ENCODE measurements at regions of chr7 and their contacts with region 1.

Region 1: DNA sequence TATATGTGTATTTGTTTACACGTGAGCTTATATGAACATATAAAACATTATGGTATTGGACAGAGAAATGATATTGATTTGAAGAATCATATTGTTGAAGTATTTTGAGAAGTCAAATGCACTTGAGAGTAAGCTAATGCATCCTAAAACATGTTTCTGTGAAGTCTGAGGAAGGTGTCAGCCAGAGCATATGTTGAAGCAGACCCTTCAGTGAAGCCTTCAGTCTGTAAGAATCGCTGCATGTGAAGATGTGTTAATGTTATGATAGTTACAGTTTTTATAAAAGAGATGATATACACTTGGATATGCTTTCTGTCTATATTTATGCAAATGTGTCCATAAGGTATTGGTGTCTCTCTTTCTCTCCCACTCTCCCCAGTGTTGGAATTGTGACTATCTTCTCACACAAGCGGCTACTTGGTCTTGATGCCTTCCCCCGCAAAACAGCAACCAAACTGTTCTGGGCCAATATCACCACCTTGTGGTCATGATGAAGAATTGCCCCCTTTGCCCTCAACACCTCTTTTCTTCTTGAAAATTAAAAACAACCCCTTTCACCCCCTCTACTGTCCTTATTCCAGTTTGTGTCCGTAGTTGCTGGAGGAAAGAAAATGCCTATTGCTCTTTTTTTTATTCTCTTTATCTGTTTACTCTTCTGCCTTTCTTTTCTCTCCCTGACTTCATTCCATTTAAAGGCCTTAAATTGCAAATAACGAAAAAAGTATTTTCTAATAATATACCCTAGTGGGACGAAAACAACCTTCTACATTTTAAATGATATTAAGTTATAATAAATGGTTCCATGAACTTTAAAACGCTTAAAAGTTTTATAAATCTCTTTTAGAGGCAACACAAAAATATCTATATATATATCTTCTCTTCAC is 64.9 kb downstream of the IKZF1 start:
- DNase-seq: peak; percentile 41
- CTCF ChIP-seq: peak; percentile 64

Region 2: GRCh38 chr7:50147951-50148808 is 221.2 kb before region 1 on chr7:
- CTCF ChIA-PET with region 1: interaction called, 10 read pairs
- POLR2A ChIA-PET with region 1: no interaction called
- DNase-seq: peak; percentile 43
- CTCF ChIP-seq: no peak

Region 3: DNA sequence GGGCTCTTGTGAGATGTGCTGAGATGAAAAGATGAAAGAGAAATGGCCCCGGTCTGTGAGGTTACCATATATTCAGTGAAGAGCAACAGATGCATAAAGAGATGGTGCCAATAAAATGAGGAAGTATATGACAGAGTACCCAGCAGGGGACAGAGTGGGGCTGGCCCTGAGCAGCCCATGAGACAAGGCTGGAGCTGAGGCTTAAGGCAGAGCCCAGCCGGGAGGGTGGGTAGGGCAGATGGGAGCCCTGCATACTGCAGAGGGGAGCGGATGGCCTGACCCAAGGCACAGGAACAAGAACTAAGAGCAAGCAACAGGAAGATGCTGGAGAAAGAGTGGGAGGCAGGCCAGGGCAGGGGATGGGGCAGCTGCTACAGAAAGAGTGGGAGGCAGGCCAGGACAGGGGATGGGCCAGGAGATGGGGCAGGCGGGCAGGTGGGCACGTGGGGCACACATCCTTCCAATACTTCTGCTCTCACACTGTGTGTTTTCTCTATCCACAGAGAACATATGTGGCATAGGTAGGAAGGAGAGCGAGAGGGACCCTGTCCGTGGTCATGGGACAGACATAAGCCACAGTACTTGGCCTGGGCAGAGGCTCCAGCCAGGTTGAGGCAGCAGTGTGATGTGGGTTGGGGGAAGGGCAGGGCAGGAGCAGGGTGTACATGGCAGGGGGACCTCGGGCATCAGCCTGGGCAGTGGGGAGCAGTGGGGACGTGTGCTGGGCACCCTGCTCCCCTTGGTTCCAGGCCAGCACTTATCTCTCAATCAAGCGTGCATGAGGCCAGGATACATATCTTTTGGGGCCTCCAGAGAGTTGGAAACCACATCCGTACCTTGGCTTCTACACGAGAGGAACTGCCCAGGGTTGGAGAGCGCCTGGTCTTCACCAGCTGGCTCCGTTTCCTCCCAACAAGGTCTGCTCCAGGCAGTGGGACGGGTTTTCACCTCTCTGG is 156.4 kb before region 1 on chr7:
- CTCF ChIA-PET with region 1: interaction called, 136 read pairs
- POLR2A ChIA-PET with region 1: no interaction called
- DNase-seq: no peak
- CTCF ChIP-seq: peak; percentile 32

Region 4: DNA sequence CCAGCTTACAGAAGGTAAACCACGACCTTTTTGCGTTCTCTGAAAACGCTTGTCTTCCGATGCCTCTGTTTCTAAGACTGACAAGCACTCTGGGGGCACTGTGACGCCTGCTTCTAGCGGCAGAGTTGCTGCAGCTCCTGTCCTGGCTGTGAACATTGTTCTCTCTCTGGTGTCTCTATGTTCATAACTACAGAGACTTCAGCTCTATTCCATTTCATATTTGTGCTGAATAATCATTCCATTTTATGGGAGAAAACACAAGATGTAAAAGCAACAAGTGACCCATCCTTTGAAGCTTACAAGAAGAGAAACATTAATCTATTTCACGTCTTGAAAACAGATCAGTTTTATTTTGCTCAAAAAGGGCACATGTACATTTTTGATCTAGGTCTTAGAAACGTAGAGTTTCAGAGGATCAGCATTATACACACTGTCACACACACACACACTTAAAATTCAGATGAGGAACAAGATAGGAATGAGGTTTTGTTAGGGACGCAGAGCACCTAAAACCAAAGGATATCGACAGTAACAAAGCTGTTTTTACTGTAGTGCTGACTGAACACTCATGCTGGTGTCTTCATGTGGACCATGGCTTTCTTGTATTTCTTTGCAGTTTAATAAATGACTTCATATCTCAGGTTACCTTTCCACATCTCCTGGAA is 61.9 kb before region 1 on chr7:
- CTCF ChIA-PET with region 1: interaction called, 12 read pairs
- POLR2A ChIA-PET with region 1: no interaction called
- DNase-seq: no peak
- CTCF ChIP-seq: no peak

Region 5: DNA sequence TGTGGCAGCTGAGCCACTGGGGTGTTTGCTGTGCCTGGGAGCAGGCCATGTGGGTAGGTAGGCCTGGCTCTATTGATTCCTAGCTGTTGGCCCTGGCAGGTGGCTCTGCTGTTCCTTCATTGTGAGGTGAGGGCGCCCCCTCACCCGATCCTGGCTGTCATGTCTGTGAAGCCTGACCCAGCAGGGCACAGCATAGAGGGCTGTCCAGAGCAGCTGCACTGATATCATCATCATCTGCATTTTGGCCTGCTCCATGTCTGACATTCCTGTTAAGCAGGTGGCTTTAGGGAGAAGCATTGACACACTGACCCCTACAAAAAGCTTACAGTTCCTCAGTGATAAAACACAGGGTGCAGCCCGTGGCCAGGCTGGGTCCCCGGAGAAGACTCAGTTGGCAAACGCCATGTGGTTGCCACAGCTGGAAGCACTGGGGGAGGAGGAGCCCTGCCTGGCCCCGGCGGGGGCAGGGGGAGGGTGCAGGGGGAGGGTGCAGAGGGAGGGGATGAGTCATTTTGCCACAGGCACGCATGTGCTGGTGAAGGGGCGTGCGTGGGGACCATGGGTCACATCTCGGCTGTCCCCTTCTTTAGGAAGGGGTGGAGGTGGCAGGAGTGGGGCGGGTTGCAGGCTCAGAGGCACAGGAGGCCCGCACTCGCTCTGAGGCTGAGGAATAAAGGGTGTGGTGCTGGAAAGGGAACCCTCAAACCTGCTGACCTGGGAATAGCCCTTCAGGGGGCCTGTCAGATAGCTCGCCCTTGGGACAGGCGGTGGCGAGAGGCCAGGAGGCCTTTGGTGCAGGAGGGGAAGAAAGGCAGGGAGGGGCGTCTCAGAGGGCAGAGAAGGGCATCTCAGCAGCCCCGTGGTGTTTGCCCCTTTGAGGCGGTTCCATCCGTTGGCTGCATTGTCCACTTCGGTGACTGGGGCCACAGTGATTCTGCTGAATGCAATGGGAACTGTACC is 33.3 kb before region 1 on chr7:
- CTCF ChIA-PET with region 1: interaction called, 18 read pairs
- POLR2A ChIA-PET with region 1: no interaction called
- DNase-seq: no peak
- CTCF ChIP-seq: peak; percentile 29

Region 6: DNA sequence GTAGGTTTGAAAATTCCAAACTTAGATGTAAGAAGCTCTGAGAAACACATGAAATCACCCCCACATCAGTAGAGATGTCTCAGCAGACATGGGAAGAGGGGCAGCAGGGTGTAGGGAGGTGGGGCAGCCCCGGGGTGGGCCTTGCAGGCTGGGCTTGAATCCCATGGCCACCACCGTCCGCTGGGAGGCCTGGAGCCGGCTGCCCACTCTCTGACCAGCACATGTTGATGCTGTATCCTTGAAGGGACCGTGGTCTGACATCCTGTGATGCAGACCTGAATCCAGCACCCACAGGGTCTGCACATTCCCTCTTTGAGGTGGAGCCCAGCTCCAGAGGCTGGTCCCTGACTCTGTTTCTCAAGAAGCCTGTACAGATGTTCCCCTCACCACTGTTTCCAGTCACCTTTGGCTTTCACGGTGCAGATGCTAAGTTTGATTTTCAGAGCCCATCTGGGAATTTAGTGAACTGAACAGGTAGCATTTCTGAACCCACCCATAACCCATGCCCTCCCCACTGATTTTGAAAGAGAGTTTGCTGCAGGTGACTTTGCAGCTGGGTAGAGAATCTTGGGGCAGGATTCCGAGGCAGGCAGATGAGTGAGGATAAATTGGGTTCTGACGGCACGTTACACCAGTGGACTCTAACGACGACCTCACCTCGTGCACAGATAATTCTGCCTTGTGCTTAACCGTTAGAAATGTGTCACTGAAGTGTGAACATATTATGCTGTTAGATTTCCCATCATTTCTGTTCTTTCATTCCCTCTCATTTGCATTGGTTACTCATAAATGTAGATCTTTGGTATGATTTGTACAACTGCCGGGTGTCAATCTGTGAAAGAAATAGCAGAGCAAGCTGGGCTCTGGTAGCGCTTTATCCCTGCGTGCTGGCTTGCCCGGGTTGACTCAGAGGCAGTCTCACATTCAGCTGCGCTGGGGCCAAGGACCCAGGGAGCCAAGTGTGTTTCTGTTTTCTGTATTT is 19.1 kb before region 1 on chr7:
- CTCF ChIA-PET with region 1: interaction called, 18 read pairs
- POLR2A ChIA-PET with region 1: no interaction called
- DNase-seq: peak; percentile 57
- CTCF ChIP-seq: no peak

Region 7: GRCh38 chr7:50481867-50482266 is 112.5 kb after region 1 on chr7:
- CTCF ChIA-PET with region 1: no interaction called
- POLR2A ChIA-PET with region 1: no interaction called
- DNase-seq: no peak
- CTCF ChIP-seq: no peak

Region 8: GRCh38 chr7:50782384-50783208 is 413.2 kb after region 1 on chr7 and contains the start of gene GRB10:
- CTCF ChIA-PET with region 1: no interaction called
- POLR2A ChIA-PET with region 1: no interaction called
- DNase-seq: no peak
- CTCF ChIP-seq: no peak